ENCODE measurements at regions of chr7 and their contacts with region 1.

Region 1: GRCh38 chr7:39948956-39949928 is 814 bp upstream of the CDK13 start:
- DNase-seq: peak; percentile 97
- ATAC-seq: peak; percentile 72
- H3K4me3 Mint-ChIP-seq: peak overlapping the region; percentile 99
- H3K27ac Mint-ChIP-seq: peak overlapping the region; percentile 100
- H3K4me1 Mint-ChIP-seq: peaks cover 40% of the 10 kb centered on the region
- H3K27me3 Mint-ChIP-seq: no peaks in the 10 kb centered on the region
- CTCF ChIP-seq: no peak

Region 2: DNA sequence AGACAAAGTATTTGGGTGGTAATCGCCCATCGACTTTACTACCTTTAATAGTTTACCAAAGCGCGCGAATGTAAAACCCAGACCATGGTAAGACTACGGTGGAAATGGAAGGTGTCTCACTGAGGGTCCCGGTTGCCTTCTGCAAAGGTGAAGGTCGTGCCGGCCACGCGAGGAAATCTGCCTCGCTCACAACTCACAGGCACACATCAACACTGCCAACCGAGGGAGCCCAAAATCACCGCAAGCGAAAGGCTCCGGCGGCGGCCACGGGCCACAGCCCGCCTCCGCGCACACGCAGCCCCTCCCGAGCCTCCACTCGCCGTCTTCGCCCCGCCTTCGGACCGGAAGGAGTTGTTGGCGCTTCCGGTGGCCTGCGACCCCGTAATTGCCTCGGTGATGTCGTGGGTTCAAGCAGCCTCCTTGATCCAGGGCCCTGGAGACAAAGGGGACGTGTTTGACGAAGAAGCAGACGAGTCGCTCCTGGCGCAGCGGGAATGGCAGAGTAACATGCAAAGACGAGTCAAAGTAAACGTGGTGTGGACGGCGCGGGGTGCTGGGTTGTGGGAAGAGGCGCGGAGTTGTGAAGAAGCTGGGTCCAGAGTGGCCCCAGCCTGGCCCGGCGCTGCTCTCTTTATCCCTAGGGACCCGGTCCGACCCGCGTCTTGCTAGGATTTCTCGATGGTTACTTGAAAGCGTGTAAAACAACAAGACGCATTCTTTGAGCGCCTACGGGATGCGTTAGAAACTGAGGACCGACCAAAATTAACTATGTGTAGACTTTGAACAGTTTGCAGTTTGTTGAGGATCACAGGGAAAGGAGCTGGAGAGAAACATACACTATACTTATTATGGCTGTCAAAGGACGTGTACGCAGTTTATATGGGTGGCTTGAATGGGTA is 383.0 kb before region 1 on chr7 and contains the start of gene YAE1:
- CTCF ChIA-PET with region 1: no interaction called
- POLR2A ChIA-PET with region 1: interaction called, 3 read pairs
- intact Hi-C with region 1: loop called (anchors 2 kb)
- DNase-seq: peak; percentile 79
- ATAC-seq: peak; percentile 96
- H3K4me3 Mint-ChIP-seq: peak within 1 kb of the TSS; percentile 99
- H3K27ac Mint-ChIP-seq: peak within 1 kb of the TSS; percentile 91
- H3K4me1 Mint-ChIP-seq: peaks cover 22% of the 10 kb centered on the region
- H3K27me3 Mint-ChIP-seq: peaks cover 1% of the 10 kb centered on the region
- CTCF ChIP-seq: no peak
- total RNA-seq, gene YAE1: 13.3 and 16.1 TPM in 2 replicates

Region 3: DNA sequence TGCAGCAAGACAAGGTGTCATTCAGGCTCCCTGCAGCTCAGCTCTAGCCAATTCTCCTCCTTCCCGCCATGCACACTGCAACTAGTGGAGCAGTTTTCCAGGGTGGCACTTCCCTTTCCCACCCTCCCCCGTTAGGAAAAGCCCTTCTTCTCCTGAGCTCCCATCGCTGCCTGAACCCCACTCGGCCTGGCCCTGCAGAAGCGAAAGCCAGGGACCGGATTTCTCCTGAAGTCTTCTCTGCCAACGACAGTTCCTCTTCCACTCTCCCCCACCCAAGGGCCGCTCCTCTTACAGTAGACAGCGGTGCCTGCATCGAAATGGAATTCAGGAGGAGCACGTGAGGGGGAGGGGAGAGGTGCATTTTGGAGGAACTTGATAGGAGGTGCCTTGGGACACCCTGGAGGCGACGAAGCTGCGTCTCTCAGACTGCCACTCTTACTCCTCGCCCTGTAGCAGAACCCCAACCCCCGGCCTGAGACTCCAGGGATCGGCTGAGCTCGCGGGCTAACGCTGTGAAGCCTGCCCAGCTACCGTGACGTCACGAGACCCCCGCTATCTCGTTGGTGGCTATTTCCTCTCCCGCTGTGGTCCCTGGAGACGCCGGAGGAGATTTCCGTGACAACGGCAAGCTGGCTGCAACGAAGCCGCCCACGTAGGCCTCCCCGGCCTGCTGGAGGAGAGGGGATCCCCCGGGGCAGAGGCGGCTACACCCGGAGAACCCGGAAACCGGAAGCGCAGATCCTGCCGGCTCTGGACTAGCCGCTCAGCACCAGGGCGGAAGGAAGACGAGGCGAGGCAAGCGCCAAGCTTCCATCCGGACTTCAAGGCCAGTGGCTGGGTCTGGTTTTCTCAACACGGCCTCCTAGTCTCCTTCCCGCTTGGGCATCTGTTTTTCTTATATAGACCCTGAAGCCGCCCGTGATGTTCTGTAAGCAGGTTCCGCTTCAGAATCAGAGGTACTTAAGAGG is 216.1 kb before region 1 on chr7:
- CTCF ChIA-PET with region 1: no interaction called
- POLR2A ChIA-PET with region 1: interaction called, 14 read pairs
- intact Hi-C with region 1: loop called (anchors 1 kb)
- DNase-seq: peak; percentile 95
- ATAC-seq: peak; percentile 89
- H3K4me3 Mint-ChIP-seq: peak overlapping the region; percentile 89
- H3K27ac Mint-ChIP-seq: peak overlapping the region; percentile 94
- H3K4me1 Mint-ChIP-seq: peaks cover 52% of the 10 kb centered on the region
- H3K27me3 Mint-ChIP-seq: no peaks in the 10 kb centered on the region
- CTCF ChIP-seq: no peak

Region 4: DNA sequence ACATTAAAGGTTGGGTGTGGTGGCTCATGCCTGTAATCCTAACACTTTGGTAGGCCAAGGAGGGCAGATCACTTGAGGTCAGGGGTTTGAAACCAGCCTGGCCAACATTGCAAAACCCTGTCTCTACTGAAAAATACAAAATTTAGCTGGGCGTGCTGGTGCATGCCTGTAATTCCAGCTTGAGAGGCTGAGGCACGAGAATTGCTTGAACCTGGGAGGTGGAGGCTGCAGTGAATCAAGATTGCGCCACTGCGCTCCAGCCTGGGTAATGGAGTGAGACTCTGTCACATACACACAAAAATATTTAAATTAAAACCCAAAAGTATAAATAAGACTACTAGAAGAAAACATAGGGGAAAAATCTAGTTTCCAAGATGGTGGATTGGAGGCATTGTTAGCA is 41.1 kb before region 1 on chr7:
- CTCF ChIA-PET with region 1: no interaction called
- POLR2A ChIA-PET with region 1: no interaction called
- intact Hi-C with region 1: no loop called
- DNase-seq: no peak
- ATAC-seq: no peak
- H3K4me3 Mint-ChIP-seq: no peak overlapping the region
- H3K27ac Mint-ChIP-seq: no peak overlapping the region
- H3K4me1 Mint-ChIP-seq: no peaks in the 10 kb centered on the region
- H3K27me3 Mint-ChIP-seq: peaks cover 8% of the 10 kb centered on the region
- CTCF ChIP-seq: no peak

Region 5: GRCh38 chr7:39971924-39972323 is 22.7 kb after region 1 on chr7:
- CTCF ChIA-PET with region 1: no interaction called
- POLR2A ChIA-PET with region 1: interaction called, 11 read pairs
- intact Hi-C with region 1: no loop called
- DNase-seq: no peak
- ATAC-seq: peak; percentile 31
- H3K4me3 Mint-ChIP-seq: peak overlapping the region; percentile 21
- H3K27ac Mint-ChIP-seq: peak overlapping the region; percentile 75
- H3K4me1 Mint-ChIP-seq: peaks cover 78% of the 10 kb centered on the region
- H3K27me3 Mint-ChIP-seq: no peaks in the 10 kb centered on the region
- CTCF ChIP-seq: no peak

Region 6: GRCh38 chr7:40057292-40057691 is 108.0 kb after region 1 on chr7:
- CTCF ChIA-PET with region 1: interaction called, 78 read pairs
- POLR2A ChIA-PET with region 1: interaction called, 13 read pairs
- intact Hi-C with region 1: loop called (anchors 1 kb)
- DNase-seq: no peak
- ATAC-seq: no peak
- H3K4me3 Mint-ChIP-seq: no peak overlapping the region
- H3K27ac Mint-ChIP-seq: peak overlapping the region; percentile 54
- H3K4me1 Mint-ChIP-seq: peaks cover 2% of the 10 kb centered on the region
- H3K27me3 Mint-ChIP-seq: no peaks in the 10 kb centered on the region
- CTCF ChIP-seq: no peak

Region 7: GRCh38 chr7:41881331-41882130 is 1932.3 kb after region 1 on chr7:
- CTCF ChIA-PET with region 1: no interaction called
- POLR2A ChIA-PET with region 1: interaction called, 3 read pairs
- intact Hi-C with region 1: loop called (anchors 5 kb)
- DNase-seq: peak; percentile 75
- ATAC-seq: peak; percentile 88
- H3K4me3 Mint-ChIP-seq: peak overlapping the region; percentile 80
- H3K27ac Mint-ChIP-seq: peak overlapping the region; percentile 91
- H3K4me1 Mint-ChIP-seq: peaks cover 76% of the 10 kb centered on the region
- H3K27me3 Mint-ChIP-seq: no peaks in the 10 kb centered on the region
- CTCF ChIP-seq: no peak

Measured in activated B cell treated with CpG ODN at 0.5 μM for 24 hours (primary cell).